ENCODE measurements at regions of chr17 and their contacts with region 1.

Region 1: DNA sequence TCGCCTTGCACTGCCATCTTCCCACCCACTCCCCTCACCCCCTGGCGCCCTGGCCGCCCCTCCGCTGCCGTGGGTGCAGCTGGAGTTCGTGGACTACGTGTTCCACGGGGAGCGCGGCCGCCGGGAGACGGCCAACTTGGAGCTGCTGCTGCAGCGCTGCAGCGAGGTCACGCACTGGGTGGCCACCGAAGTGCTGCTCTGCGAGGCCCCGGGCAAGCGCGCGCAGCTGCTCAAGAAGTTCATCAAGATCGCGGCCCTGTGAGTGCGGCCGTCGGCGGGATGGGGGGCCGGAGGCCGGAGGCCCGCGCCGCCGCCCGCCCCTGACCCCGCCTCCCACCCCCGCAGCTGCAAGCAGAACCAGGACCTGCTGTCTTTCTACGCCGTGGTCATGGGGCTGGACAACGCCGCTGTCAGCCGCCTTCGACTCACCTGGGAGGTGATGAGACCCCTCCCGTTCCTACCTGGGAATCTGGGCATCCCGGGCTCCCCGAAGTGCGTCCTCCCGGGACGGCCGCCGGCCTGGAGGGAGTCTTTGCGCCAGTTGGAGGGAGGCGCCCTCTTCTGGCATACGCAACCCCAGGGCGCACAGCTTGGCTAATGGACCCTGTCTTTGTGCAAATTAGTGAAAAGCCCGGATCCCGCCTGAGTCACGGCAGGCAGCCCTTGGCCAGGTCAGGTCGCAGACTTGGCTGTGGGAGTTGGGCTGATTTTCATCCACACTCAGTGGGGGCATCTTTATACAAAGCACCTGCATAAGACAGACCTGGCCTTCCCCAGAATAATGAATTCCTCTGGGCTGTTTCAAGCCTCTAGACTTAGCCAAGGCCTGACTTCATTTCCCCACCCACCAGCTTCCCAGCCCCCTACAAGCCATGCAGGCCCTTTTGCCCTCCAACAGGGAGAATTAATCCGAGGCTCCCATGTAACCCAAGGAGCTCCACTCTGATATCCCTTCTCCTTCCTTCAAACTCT is 14.3 kb downstream of the RAPGEFL1 start:
- DNase-seq: peak; percentile 87
- H3K4me3 ChIP-seq: peak overlapping the region; percentile 48 to 55
- H3K27ac ChIP-seq: peak overlapping the region in 1 of 2 experiments; percentile 55; a peak in 1 of 4 replicates
- H3K4me1 ChIP-seq: peaks cover 4 to 26% of the 10 kb centered on the region in 2 experiments; a peak in 3 of 4 replicates
- H3K27me3 ChIP-seq: no peaks in the 10 kb centered on the region
- CTCF ChIP-seq: peak; percentile 78
- EP300 ChIP-seq: no peak
- RAD21 ChIP-seq: peak; percentile 62

Region 2: GRCh38 chr17:39845052-39845846 is 346.3 kb before region 1 on chr17:
- CTCF ChIA-PET with region 1: no interaction called
- POLR2A ChIA-PET with region 1: no interaction called
- DNase-seq: no peak
- H3K4me3 ChIP-seq: no peak overlapping the region
- H3K27ac ChIP-seq: no peak overlapping the region
- H3K4me1 ChIP-seq: no peaks in the 10 kb centered on the region
- H3K27me3 ChIP-seq: peaks cover 52% of the 10 kb centered on the region
- CTCF ChIP-seq: no peak
- EP300 ChIP-seq: no peak
- RAD21 ChIP-seq: no peak

Region 3: DNA sequence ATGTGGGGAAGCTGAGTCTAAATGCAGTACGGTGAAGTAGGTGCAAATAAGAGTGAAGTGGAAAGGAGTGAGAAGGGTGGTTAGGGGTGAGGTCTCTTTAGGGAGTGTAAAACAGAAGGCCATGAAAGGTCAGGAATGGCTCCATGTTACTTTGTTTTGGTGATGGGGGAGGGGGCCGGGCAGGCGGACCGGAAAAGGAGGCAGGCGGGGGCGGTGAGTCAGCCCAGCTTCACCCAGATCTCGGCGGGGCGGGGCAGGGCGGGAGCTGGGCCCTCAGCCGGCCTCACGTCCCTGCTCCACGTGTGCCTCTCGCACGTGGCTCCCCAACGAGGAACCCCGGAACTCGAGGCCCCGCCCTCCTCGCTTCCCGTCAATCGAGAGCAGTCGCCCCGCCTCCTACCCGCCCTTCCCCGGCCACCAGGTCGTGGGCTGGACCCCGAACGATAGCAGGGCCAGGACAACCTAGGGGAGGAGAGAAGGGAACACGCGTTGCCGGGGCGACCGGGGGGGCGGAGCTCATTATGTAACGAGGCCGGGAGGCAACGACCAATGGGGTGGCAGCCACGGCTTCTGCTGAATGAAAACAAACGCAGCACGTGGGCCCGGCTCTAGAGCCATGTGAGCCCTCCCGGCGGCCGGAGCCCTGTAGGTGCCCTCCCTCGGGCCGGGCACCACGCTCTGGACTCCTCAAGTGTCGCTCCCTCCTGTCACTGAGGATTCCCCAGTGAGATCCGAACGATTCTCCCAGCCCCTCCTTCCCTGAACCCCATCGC is 92.5 kb before region 1 on chr17:
- CTCF ChIA-PET with region 1: interaction called, 13 read pairs
- POLR2A ChIA-PET with region 1: no interaction called
- DNase-seq: peak; percentile 97
- H3K4me3 ChIP-seq: peak overlapping the region; percentile 73 to 96
- H3K27ac ChIP-seq: peak overlapping the region; percentile 74 to 95
- H3K4me1 ChIP-seq: peaks cover 14 to 28% of the 10 kb centered on the region in 2 experiments; a peak in 1 of 4 replicates
- H3K27me3 ChIP-seq: no peaks in the 10 kb centered on the region
- CTCF ChIP-seq: no peak
- EP300 ChIP-seq: peak; percentile 16 to 81; a peak in 2 of 4 replicates
- RAD21 ChIP-seq: no peak

Region 4: DNA sequence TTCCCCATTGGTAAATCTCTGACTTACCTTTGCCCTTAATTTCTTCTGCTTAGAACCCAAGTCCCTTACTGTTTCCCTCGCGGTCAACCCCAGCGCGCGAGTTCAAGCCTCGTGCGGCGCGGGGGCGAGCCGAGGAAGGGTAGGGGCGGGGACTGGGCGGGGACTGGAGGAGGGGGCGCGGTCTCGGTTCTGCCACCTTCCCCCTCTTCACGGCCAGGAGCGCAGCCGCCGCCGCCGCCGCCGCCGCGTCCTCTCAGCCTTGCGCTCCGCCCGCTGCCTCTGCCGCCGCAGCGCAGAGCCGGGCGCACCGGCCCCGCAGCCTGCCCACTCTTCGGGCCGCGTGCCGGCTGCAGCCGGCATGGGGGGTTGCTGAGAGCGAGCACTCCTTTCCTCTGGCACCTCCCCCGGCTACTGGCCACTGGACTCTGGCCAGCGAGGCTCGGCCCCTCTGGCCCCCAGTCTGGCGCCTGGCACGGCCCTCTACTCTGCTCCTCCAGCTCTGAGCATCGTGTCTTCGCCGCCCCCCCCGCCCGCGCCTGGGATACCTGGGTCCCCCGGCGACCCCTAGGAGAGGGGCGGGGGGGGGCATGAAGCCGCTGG is 14.1 kb before region 1 on chr17 and contains the start of gene RAPGEFL1:
- CTCF ChIA-PET with region 1: interaction called, 94 read pairs
- POLR2A ChIA-PET with region 1: interaction called, 3 read pairs
- DNase-seq: peak; percentile 95
- H3K4me3 ChIP-seq: peak within 1 kb of the TSS; percentile 44 to 52; a peak in 2 of 4 replicates
- H3K27ac ChIP-seq: peak within 1 kb of the TSS in 1 of 2 experiments; percentile 48; a peak in 1 of 4 replicates
- H3K4me1 ChIP-seq: peaks cover 6 to 32% of the 10 kb centered on the region in 2 experiments; a peak in 1 of 4 replicates
- H3K27me3 ChIP-seq: no peaks in the 10 kb centered on the region
- CTCF ChIP-seq: no peak
- EP300 ChIP-seq: no peak
- RAD21 ChIP-seq: no peak
- polyA plus RNA-seq, gene RAPGEFL1: 5.9 and 6.0 TPM in 2 replicates

Region 5: GRCh38 chr17:40219073-40219860 is 27.7 kb after region 1 on chr17 and contains the start of gene WIPF2:
- CTCF ChIA-PET with region 1: interaction called, 14 read pairs
- POLR2A ChIA-PET with region 1: interaction called, 5 read pairs
- DNase-seq: peak; percentile 95
- H3K4me3 ChIP-seq: peak within 1 kb of the TSS; percentile 65 to 100
- H3K27ac ChIP-seq: peak within 1 kb of the TSS; percentile 90 to 94
- H3K4me1 ChIP-seq: peaks cover 0 to 4% of the 10 kb centered on the region in 2 experiments; a peak in 1 of 4 replicates
- H3K27me3 ChIP-seq: no peaks in the 10 kb centered on the region
- CTCF ChIP-seq: peak; percentile 56
- EP300 ChIP-seq: peak in 1 of 2 experiments; percentile 56; a peak in 1 of 4 replicates
- RAD21 ChIP-seq: no peak
- polyA plus RNA-seq, gene WIPF2: 5.9 and 6.8 TPM in 2 replicates

Region 6: DNA sequence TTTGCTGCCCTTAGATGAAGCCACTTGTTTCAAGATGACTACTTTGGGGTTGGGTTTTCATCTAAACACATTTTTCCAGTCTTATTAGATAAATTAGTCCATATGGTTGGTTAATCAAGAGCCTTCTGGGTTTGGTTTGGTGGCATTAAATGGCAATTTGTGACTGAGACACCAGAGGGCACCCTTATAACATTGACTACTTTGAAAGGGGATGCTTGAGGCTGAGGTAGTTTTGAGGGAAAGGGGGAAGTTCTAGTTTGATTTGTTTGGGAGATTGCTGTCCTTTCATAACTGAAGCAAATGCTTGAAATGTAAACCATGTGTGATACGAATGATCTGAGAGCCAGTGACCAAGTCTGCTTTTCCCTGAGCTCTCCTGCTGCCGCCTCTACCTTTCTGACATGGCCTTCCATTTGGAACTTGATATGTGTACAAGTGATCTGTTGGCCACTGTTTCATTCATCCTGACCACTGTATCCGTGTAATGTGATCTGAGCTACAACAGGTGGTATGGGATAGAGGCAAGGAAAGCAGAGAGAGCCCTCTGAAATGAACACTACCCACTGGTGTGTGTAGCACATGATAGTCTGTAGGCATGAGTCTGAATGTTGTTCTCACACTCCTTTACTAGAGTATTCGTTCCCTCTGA is 111.6 kb after region 1 on chr17:
- CTCF ChIA-PET with region 1: interaction called, 14 read pairs
- POLR2A ChIA-PET with region 1: no interaction called
- DNase-seq: peak; percentile 63
- H3K4me3 ChIP-seq: no peak overlapping the region; a peak in 1 of 4 replicates
- H3K27ac ChIP-seq: peak overlapping the region; percentile 82 to 99
- H3K4me1 ChIP-seq: peaks cover 48 to 53% of the 10 kb centered on the region in 2 experiments
- H3K27me3 ChIP-seq: no peaks in the 10 kb centered on the region
- CTCF ChIP-seq: peak; percentile 86
- EP300 ChIP-seq: 0 out of 4 replicates have a peak, but pooled peaks of 1 of the 2 experiments have one; percentile 45
- RAD21 ChIP-seq: peak; percentile 96

Measured in SK-N-SH (cell line).